Dendritic cell treated with granulocyte-macrophage colony-stimulating factor and Interleukin-4, amounts not matched to agents 40 ng/mL and 50 ng/mL, for 4 days (primary cell): ENCODE measurements at regions of chr11 and their contacts with region 1.

Region 1: DNA sequence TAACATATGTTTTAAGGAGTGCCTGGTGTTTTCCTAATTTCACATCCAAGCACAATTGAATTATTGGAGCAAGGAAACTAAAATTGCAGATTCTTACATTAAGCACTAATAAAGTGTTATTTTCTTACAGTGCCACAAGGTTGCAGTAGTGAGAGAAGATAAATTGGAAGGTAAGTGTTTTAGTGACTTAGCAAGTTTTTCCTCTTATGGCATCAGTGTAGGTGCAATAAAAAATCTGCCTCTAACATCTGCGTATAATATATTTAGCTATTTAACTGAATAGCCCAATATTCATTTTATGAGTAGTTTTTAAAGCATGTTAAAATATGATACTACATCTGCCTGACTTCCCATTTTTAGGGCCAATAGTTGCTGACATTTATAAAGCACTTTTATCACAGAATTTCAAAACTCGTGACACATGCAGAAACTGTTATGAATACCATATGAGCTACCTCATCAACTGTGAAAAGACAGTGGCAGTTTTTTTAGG is 19.0 kb downstream of the POLD3 start:
- H3K4me3 Mint-ChIP-seq: no peak overlapping the region
- H3K27ac Mint-ChIP-seq: peak overlapping the region; percentile 84
- H3K4me1 Mint-ChIP-seq: peaks cover 14% of the 10 kb centered on the region
- H3K27me3 Mint-ChIP-seq: no peaks in the 10 kb centered on the region

Region 2: DNA sequence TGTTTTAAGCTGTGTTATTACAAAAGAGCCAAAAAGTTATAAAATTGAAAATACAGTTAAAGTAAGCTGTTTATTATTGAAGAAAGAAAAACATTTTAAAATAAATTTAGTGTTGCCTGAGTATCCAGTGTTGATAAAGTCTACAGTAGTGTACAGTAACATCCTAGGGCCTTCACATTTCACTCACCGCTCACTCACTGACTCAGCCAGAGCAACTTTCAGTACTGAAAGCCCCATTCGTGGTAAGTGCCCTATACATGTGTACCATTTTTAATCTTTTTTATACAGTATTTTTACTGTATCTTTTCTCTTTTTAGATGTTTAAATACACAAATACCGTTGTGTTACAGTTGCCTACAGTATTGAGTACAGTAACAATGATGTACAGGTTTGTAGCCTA is 16.0 kb after region 1 on chr11:
- intact Hi-C with region 1: no loop called
- H3K4me3 Mint-ChIP-seq: no peak overlapping the region
- H3K27ac Mint-ChIP-seq: no peak overlapping the region
- H3K4me1 Mint-ChIP-seq: peaks cover 39% of the 10 kb centered on the region
- H3K27me3 Mint-ChIP-seq: no peaks in the 10 kb centered on the region

Region 3: GRCh38 chr11:74687237-74688023 is 76.0 kb after region 1 on chr11:
- intact Hi-C with region 1: loop called (anchors 2 kb)
- H3K4me3 Mint-ChIP-seq: no peak overlapping the region
- H3K27ac Mint-ChIP-seq: peak overlapping the region; percentile 90
- H3K4me1 Mint-ChIP-seq: peaks cover 58% of the 10 kb centered on the region
- H3K27me3 Mint-ChIP-seq: peaks cover 16% of the 10 kb centered on the region

Region 4: GRCh38 chr11:74702383-74703007 is 91.1 kb after region 1 on chr11:
- intact Hi-C with region 1: no loop called
- H3K4me3 Mint-ChIP-seq: no peak overlapping the region
- H3K27ac Mint-ChIP-seq: no peak overlapping the region
- H3K4me1 Mint-ChIP-seq: peaks cover 5% of the 10 kb centered on the region
- H3K27me3 Mint-ChIP-seq: peaks cover 10% of the 10 kb centered on the region

Region 5: DNA sequence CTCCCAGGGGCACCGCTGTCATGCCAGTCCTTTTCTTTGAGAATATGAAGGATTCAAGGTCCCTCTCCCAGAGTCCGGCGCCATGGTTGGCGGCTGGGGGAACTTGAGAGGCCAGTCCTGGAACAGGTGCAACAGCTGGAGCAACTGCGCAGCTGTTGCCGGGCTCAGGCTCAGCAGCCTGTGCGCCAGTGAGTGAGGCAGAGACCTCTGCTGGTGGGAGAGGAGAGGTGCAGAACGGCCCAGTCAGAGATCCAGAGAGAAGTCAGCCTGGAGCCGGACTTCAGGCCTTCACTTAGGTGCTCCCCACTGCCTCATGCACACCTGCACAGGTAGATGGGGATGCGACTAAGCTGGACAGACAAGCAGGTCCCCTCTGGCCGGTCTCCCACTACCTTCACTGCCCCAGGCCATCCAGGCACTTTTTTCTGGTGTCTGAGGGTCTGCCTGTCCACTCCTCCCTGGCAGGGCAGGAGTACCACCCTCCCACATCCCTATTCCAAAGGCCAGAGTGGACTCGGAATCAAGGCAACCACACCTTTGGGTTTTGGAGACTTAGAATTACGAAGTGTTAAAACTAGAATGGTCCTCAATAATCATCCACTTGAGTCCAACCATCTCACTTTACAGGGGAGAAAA is 115.2 kb after region 1 on chr11:
- intact Hi-C with region 1: loop called (anchors 5 kb)
- H3K4me3 Mint-ChIP-seq: no peak overlapping the region
- H3K27ac Mint-ChIP-seq: no peak overlapping the region
- H3K4me1 Mint-ChIP-seq: peaks cover 7% of the 10 kb centered on the region
- H3K27me3 Mint-ChIP-seq: peaks cover 67% of the 10 kb centered on the region